BJ (cell line): ENCODE measurements at regions of chr18 and their contacts with region 1.

Region 1: GRCh38 chr18:11947214-11948191 is 33.8 kb upstream of the IMPA2 start:
- DNase-seq: peak; percentile 80
- H3K4me3 ChIP-seq: peak overlapping the region; percentile 30
- H3K27me3 ChIP-seq: no peaks in the 10 kb centered on the region
- CTCF ChIP-seq: no peak

Region 2: DNA sequence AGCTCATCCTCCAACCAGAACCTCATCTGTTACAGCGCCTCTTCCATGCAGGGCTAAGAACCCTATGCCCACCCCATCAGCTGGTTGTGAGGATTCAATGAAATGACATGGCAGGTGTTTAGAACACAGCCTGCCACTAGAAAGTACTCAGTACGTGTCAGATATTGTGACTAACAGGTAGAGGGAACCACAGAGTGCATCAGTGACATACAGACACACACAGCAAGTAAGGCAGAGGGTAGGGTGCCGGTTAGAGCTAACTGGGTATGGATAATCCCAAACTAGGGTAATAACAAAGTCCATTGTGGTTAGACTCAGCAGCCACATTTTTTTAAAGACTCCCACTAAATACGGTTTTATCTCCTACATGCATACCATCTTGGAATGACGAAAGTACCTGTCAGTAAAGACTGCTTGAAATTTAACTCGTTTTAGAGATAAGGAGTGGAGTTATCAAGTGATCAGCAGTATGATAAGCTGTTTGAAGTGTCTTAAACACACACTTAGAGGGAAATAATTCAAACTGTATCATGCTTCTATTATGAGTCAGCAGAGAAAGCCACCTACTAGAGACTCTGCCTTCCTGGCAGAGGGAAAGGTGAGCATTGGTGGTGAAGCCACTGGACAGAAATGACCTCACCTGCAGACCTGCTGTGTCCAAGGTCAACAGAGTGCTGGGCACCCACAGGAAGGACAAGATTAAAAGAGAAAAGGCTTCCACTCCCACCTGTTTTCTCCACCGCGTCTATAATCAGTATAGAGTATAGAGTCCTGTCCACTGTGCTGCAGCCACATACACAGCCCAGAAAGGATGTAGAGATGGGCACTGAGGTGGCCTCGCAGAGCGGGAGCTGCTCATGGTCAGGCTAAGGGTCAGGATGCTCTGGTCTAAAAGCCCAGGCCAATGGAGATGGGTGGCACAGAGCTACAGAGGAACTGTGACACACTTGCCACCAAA is 59.9 kb before region 1 on chr18:
- CTCF ChIA-PET with region 1: no interaction called
- POLR2A ChIA-PET with region 1: no interaction called
- DNase-seq: no peak
- H3K4me3 ChIP-seq: no peak overlapping the region
- H3K27me3 ChIP-seq: no peaks in the 10 kb centered on the region
- CTCF ChIP-seq: no peak

Region 3: GRCh38 chr18:11980555-11981382 is 33.3 kb after region 1 on chr18:
- CTCF ChIA-PET with region 1: interaction called, 3 read pairs
- POLR2A ChIA-PET with region 1: interaction called, 14 read pairs
- DNase-seq: peak; percentile 92
- H3K4me3 ChIP-seq: peak overlapping the region; percentile 82
- H3K27me3 ChIP-seq: no peaks in the 10 kb centered on the region
- CTCF ChIP-seq: peak; percentile 36; the same call in 1 of the 2 replicates